ENCODE measurements at regions of chr1 and their contacts with region 1.

Region 1: GRCh38 chr1:205680073-205680851 is at the start of gene SLC45A3:
- DNase-seq: peak; percentile 65
- ATAC-seq: peak; percentile 60
- H3K4me3 Mint-ChIP-seq: peak within 1 kb of the TSS; percentile 77
- H3K27ac Mint-ChIP-seq: no peak within 1 kb of the TSS
- H3K4me1 Mint-ChIP-seq: peaks cover 49% of the 10 kb centered on the region
- H3K27me3 Mint-ChIP-seq: peaks cover 7% of the 10 kb centered on the region
- CTCF ChIP-seq: no peak
- total RNA-seq, gene SLC45A3: 14.8 to 15.2 TPM (median 15.0 TPM) in 3 replicates

Region 2: GRCh38 chr1:205626216-205626615 is 54.0 kb before region 1 on chr1:
- CTCF ChIA-PET with region 1: no interaction called
- POLR2A ChIA-PET with region 1: no interaction called
- DNase-seq: no peak
- ATAC-seq: no peak
- H3K4me3 Mint-ChIP-seq: no peak overlapping the region
- H3K27ac Mint-ChIP-seq: peak overlapping the region; percentile 93
- H3K4me1 Mint-ChIP-seq: peaks cover 35% of the 10 kb centered on the region
- H3K27me3 Mint-ChIP-seq: no peaks in the 10 kb centered on the region
- CTCF ChIP-seq: no peak

Region 3: DNA sequence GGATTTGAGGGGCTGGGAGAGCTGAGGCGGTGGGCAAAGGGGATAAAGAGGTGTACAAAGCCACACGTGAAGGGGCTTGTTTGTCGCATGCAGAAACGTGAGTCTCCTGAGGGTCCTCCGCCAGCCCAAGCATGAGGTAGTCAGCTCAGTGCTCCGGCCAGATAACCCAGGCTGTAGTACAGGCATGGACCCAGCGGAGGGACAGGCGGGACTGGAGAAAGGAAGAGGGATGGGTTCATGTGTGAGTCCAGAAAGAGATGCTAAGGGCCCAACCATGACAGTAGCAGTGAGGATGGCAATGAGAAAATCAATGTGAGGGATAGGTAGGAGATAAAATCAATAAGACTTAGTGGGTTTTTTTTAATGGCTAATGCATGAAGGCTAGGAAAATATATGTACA is 34.7 kb before region 1 on chr1:
- CTCF ChIA-PET with region 1: no interaction called
- POLR2A ChIA-PET with region 1: no interaction called
- DNase-seq: no peak
- ATAC-seq: peak; percentile 68
- H3K4me3 Mint-ChIP-seq: no peak overlapping the region
- H3K27ac Mint-ChIP-seq: 0 out of 2 replicates have a peak overlapping the region, but pooled peaks have one; percentile 30
- H3K4me1 Mint-ChIP-seq: peaks cover 24% of the 10 kb centered on the region
- H3K27me3 Mint-ChIP-seq: no peaks in the 10 kb centered on the region
- CTCF ChIP-seq: no peak

Region 4: DNA sequence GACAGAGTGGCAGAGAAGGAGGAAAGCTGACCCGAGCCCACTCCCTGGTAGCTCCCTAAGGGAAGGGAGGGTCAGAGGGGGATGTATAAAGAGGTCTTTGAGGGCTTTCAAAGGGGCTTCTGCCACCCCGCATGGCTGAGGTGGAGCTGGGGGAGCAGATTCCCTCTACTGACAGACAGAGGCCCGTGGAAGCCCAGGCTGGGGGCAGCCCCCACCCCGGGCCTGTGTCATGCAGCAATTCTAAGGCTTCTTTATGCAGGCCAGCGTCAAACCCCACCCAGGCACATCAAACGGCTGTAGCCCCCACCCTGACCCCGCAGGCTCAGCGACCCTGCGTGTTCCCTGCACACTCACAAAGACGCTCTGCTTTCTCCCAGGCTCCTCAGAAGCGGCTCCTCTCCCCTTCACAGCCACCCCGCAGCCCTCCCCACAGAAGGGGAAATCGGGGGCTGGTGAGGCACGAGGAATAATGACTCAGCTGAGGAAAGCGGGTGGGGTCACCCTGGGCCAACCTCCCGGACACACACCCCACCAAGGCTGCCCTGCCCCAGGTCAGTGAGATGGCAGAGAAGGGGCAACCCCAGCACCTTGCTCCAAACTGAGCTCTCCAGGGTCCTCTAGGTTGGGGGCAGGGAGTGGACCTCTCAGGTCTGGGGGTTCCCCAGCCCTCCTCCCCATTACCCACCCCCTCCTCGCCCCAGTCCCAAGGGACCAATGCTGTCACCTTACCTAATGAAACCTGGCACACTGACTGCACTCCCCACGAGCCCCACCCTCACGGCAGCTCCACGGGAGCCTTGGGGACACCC is 10.7 kb before region 1 on chr1:
- CTCF ChIA-PET with region 1: interaction called, 16 read pairs
- POLR2A ChIA-PET with region 1: interaction called, 4 read pairs
- DNase-seq: no peak
- ATAC-seq: no peak
- H3K4me3 Mint-ChIP-seq: peak overlapping the region; percentile 10
- H3K27ac Mint-ChIP-seq: no peak overlapping the region
- H3K4me1 Mint-ChIP-seq: peaks cover 68% of the 10 kb centered on the region
- H3K27me3 Mint-ChIP-seq: no peaks in the 10 kb centered on the region
- CTCF ChIP-seq: no peak

Region 5: GRCh38 chr1:205693421-205693991 is 13.2 kb after region 1 on chr1:
- CTCF ChIA-PET with region 1: interaction called, 12 read pairs
- POLR2A ChIA-PET with region 1: interaction called, 3 read pairs
- DNase-seq: no peak
- ATAC-seq: peak; percentile 53
- H3K4me3 Mint-ChIP-seq: no peak overlapping the region
- H3K27ac Mint-ChIP-seq: peak overlapping the region; percentile 24; the same call in 1 of the 2 replicates
- H3K4me1 Mint-ChIP-seq: peaks cover 20% of the 10 kb centered on the region
- H3K27me3 Mint-ChIP-seq: no peaks in the 10 kb centered on the region
- CTCF ChIP-seq: no peak

Measured in WTC11 (cell line).